Right ventricle myocardium inferior (tissue), 1 donor: ENCODE measurements at regions of chr6 and their contacts with region 1.

Region 1: DNA sequence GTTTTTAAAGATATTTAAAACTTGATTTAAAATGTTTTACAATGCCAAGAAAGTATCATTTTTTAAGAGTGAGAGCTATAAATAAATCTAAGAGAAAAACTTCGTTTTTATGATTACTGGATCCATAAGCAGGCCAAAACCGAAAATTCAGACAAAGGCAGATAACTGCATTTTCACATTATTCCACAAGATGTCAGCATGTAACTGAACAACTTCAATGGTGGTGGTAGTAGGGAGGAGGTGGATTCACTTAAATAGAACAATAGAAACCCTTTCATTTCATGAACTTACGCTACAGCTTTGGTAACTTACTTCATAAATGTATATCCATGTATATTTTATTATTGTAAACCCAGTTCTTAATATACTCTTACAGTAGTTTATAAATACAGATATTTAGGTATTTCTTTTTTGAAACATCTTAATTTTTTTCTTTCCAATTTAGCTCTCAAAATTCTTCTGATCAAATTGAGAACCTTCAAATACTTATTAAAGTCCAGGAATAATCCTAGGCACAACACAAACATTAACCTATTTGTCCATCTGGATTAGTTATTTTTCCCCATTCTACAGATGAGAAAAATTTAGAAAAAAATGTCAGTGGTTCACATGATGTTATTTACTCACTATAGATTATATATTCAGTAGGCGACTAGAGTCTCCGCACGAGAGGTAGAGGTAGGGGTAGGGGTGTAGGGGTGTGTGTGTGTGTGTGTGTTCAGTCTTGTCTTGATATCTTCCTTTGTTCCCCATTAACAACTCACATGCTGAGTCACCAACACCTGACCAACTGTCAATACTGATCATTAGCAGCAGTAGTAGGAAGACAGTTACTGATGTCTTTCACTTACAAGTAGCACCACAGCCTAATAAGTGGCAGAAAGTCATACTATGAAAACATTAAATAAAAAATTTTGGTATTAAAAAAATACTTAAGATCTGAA is 111.5 kb downstream of the ARHGAP18 start:
- DNase-seq: no peak
- ATAC-seq: peak; percentile 72

Region 2: DNA sequence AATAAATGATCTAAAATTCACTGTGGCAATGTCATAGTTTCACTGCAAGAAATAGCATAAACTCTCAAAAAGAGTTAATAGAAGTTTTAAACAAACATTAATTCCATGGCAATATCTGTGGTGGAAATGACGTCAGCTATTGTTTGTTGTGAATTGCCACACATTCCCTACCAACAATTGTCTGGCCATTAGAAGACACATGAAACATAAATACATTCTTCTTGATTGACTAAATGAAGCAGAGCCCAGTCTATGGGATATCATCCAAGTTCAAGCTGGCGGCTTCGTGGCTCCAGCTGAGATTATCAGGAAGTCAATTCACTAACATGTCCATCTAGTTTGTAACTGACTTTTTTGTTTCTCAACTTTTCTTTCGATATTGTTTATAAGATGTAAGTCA is 257.5 kb before region 1 on chr6:
- intact Hi-C with region 1: no loop called
- DNase-seq: no peak
- ATAC-seq: peak; percentile 38

Region 3: DNA sequence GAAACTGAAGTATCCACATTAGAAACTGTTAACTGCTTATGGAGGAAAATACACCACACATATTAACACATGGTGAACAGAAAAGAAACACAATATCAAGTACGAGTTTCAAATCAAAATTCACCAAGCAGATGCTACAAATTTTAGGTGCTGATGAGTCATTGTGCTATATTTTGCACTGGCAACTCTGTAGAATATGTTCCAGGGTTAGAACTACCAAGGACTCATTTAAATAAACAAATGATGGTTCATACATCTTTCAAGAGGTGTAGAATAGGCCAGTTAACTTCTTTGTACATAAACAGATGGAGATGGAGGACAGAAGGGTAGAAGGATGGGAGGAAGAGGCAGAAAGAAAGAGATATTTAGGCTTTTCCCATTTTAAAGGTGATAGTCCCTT is 73.5 kb before region 1 on chr6:
- intact Hi-C with region 1: no loop called
- DNase-seq: no peak
- ATAC-seq: no peak

Region 4: DNA sequence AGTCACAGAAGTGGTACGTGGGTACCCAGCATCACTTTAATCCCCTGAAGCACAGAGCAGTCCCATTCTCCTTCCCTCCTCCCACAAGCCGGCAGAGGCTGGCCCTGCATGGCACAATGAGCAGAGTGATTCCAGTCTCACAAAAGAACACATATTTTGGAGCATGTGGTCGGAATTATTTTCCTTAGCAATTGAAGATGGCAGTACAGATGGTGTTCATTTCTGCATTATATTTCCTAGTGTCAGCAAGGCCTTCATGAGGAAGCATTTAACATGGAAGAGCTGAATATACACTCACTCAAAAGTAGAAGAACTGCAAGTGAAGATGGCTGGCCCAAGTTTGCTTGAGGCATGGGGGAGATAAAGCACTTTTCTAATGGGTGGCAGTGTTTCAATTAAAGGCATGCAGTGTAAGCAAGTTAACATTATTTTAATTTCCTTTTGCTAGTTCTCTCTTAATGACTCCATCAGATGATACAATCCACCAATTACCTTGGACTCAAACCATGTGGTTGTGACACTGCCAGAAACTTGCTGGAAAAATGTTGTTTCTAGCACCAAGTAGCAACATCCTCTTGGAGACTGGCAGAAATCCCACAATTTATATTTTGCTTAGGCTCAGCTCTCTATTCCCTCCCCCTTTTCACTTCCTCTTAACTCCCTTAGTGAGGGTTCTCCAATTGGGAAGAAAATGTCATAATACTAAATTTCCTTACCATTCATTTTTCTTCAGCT is 37.0 kb after region 1 on chr6:
- intact Hi-C with region 1: no loop called
- DNase-seq: no peak
- ATAC-seq: peak; percentile 28

Region 5: DNA sequence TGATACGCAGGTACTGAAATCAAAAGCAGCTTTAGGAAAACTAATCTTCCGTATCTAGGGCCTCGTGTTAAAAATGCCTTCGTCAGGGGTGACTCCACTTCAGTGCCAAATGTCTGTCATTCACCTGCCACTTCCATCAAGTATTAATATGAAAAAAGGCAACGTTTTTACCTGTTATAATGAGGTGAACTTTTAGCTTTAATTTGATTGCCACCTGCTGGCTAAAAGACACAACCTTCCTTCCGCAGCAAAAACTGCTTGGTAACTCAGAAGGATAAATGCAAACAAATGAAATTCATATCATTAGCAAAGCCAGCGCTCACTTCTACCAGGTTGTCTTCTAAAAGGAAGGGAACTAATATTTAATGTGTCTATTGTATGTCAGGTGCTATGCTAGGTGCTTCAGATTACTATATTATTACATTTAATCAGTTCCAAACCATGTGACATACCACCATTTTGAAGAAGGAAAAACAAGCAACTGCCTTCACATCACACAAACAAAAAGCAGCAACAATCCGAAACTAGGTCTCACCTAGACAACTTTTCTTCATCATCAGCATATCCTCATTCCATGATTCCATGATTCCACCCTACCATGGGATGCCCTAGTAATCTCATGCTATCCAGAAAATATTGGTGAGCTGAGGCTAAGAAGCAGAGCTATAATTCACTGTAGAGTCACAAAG is 132.1 kb after region 1 on chr6:
- intact Hi-C with region 1: loop called (anchors 1 kb)
- DNase-seq: no peak
- ATAC-seq: no peak

Region 6: GRCh38 chr6:129748212-129748900 is 149.8 kb after region 1 on chr6:
- intact Hi-C with region 1: loop called (anchors 2 kb)
- DNase-seq: no peak
- ATAC-seq: peak; percentile 65

Region 7: DNA sequence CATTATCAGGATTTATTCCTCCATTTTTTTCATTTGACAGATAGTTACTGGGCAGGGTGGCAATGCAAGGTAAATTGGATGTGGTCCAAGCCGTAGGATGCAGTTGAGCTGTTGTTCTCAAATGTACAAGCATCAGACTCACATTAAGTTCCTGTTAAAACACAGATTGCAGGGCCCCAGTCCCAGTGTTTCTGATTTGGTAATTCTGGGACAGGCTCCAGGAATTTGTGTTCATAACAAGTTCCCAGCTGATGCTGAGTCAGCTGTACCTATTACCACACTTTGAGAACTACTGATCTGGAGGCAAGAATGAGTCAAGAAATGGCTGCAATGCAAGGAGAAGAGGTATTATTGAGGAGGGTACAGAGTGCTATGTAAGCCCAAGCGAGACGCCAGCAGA is 250.9 kb after region 1 on chr6:
- intact Hi-C with region 1: no loop called
- DNase-seq: no peak
- ATAC-seq: no peak

Region 8: DNA sequence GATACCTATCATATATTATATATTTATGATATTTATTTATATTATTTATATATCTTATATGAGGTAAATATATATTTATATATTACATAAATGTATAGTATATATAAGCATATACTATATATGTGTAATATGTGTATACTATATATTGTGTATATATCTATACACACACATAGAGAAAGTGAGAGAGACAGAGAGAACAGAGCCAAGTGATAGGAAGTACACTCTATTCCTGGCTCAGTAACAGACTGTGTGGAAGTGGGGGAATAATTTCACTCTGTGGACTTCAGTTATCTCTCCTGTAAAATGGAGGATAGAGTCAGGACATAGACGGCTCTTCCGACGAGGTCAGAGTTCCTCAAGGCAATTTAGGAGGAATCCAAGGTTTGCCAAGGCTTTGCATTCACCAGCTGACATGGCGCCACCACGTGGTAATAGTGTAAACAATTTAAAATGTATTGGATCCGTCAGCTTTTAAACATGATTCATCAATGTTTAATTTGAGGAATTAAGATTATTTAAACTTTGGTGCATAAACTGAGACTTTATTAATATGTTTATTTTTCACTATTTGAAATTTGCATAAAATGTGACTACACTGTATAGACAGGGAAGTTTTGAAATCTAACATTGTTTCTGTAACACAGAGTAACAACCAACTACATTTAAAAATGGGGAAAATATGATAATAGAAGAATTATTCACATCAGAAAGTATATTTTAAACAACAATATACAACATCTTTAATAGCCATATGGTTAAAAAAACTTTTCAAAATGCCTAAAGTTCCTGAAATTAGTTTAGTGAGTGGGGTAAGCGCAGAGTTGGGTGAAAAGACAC is 338.0 kb after region 1 on chr6:
- intact Hi-C with region 1: loop called (anchors 10 kb)
- DNase-seq: peak; percentile 75
- ATAC-seq: peak; percentile 5